Panc1 (cell line): ENCODE measurements at regions of chr2 and their contacts with region 1.

Region 1: DNA sequence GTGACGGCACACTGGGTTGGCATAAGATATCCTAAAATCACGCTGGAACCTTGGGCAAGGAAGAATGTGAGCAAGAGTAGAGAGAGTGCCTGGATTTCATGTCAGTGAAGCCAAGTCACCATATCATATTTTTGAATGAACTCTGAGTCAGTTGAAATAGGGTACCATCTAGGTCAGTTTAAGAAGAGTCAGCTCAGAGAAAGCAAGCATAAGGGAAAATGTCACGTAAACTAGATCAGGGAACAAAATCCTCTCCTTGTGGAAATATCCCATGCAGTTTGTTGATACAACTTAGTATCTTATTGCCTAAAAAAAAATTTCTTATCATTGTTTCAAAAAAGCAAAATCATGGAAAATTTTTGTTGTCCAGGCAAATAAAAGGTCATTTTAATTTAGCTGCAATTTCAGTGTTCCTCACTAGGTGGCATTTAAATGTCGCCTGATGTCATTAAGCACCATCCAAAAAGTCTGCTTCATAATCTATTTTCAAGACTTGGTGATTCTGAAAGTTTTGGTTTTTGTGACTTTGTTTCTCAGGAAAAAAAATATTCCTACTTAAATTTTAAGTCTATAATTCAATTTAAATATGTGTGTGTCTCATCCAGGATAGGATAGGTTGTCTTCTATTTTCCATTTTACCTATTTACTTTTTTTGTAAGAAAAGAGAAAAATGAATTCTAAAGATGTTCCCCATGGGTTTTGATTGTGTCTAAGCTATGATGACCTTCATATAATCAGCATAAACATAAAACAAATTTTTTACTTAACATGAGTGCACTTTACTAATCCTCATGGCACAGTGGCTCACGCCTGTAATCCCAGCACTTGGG is 19.6 kb downstream of the RSAD2 start:
- DNase-seq: no peak
- ATAC-seq: no peak
- H3K4me3 ChIP-seq: no peak overlapping the region
- H3K27ac ChIP-seq: no peak overlapping the region
- H3K4me1 ChIP-seq: no peaks in the 10 kb centered on the region
- H3K27me3 ChIP-seq: no peaks in the 10 kb centered on the region
- CTCF ChIP-seq: peak; percentile 72; the same call in 1 of the 2 replicates

Region 2: GRCh38 chr2:7045601-7046590 is 148.8 kb after region 1 on chr2:
- CTCF ChIA-PET with region 1: no interaction called
- POLR2A ChIA-PET with region 1: no interaction called
- in situ Hi-C with region 1: no loop called
- intact Hi-C with region 1: loop called (anchors 2 kb)
- DNase-seq: no peak
- ATAC-seq: no peak
- H3K4me3 ChIP-seq: no peak overlapping the region
- H3K27ac ChIP-seq: no peak overlapping the region
- H3K4me1 ChIP-seq: no peaks in the 10 kb centered on the region
- H3K27me3 ChIP-seq: no peaks in the 10 kb centered on the region
- CTCF ChIP-seq: no peak

Region 3: DNA sequence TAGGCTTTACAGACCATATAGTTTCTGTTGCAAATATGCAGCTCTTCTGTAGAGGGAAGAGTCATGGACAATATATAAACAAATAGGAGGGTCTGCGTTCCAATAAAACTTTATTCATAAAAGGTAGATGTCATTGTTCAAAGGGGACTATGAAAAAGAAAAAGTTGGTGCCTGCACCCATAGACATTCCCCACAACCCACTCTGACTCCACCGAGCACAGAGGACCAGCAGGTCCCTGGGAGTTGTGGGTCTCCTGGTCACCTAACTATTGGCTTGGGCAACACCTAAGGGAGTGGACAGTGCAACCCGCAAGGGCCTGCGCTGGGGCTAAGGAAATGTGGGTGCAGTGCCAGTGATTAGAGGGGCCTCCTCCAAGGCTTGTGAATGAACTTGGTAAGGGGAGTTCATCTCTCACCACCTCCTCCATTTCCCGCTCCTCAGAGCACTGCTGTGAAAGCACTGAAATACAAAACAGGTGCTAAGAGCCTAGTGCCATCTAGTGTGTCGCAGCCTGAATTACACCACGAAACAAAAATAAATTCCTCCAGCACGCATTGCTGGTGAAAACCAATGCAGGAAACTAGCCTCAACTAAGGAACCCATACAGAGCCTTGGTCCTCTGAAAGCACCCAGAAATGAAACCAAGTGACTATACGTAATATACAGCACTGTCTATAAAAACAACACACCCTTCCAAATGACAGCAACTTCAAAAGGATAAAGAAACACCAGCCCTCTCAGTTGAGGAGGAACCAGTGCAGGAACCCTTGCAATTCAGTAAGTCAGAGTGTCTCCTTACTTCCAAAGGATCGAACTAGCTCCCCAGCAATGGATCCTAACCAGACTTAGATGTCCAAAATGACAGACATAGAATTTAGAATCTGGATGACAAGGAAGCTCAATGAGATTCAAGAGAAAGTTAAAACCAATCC is 186.7 kb after region 1 on chr2:
- CTCF ChIA-PET with region 1: no interaction called
- POLR2A ChIA-PET with region 1: no interaction called
- in situ Hi-C with region 1: no loop called
- intact Hi-C with region 1: loop called (anchors 5 kb)
- DNase-seq: peak; percentile 25
- ATAC-seq: peak; percentile 72; the same call in 1 of the 2 replicates
- H3K4me3 ChIP-seq: no peak overlapping the region
- H3K27ac ChIP-seq: no peak overlapping the region
- H3K4me1 ChIP-seq: no peaks in the 10 kb centered on the region
- H3K27me3 ChIP-seq: no peaks in the 10 kb centered on the region
- CTCF ChIP-seq: peak; percentile 85